GM13976 (cell line): ENCODE measurements at regions of chr15 and their contacts with region 1.

Region 1: GRCh38 chr15:32942401-32942841 is 224.6 kb downstream of the GREM1 start:
- DNase-seq: no peak
- CTCF ChIP-seq: no peak

Region 2: DNA sequence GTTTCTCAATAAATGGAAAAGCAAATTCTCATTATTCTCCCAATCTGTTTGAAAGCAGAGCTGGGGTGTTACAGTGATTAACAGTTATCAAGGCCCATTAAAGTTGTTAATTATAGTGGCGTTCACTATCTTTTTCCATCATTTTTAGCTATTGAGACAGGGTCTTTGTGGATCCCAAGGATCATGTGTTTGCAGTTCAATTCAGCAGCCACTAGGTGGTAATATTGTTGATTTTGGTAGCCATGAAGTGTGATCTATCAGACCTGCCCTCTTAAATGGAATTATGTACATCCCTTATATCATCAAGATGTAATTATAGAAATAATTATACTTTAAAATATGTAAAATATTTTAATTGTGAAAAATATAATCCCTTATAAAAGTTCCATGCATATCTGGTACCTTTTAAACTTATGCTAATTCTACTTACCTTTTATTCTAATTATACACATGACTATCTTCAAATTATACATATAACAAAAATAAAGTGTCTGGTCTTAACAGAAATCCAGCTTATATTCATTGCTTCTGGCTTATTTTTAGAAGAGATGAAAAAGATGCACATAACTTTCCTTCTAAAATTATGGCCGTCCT is 98.2 kb before region 1 on chr15:
- in situ Hi-C with region 1: loop called (anchors 10 kb)
- DNase-seq: peak; percentile 45
- CTCF ChIP-seq: peak; percentile 53

Region 3: DNA sequence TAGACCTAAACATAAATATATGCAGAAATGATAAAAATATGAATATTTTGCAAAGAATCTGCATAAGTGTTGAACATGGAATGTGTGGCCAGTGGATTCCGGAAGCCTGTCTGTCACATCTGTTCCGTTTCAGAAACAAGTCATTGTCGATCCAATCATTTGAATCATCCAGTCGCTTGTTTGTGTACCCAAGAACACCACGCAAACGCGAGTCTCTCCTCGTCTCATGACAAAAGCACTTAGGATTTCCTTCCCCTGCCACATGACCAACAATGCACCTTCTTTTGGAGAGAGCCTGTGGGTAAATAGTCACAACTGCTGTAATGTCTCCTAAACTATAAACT is 171.9 kb after region 1 on chr15:
- in situ Hi-C with region 1: no loop called
- DNase-seq: no peak
- CTCF ChIP-seq: no peak